ENCODE measurements at regions of chr9 and their contacts with region 1.

Region 1: GRCh38 chr9:114224247-114224610 is 68.9 kb downstream of the COL27A1 start:
- DNase-seq: no peak
- ATAC-seq: no peak
- H3K4me3 ChIP-seq: no peak overlapping the region
- H3K4me3 Mint-ChIP-seq: no peak overlapping the region
- H3K27ac ChIP-seq: no peak overlapping the region
- H3K27ac Mint-ChIP-seq: no peak overlapping the region
- H3K4me1 ChIP-seq: no peaks in the 10 kb centered on the region
- H3K4me1 Mint-ChIP-seq: no peaks in the 10 kb centered on the region
- H3K27me3 ChIP-seq: no peaks in the 10 kb centered on the region
- H3K27me3 Mint-ChIP-seq: no peaks in the 10 kb centered on the region
- CTCF ChIP-seq: no peak

Region 2: DNA sequence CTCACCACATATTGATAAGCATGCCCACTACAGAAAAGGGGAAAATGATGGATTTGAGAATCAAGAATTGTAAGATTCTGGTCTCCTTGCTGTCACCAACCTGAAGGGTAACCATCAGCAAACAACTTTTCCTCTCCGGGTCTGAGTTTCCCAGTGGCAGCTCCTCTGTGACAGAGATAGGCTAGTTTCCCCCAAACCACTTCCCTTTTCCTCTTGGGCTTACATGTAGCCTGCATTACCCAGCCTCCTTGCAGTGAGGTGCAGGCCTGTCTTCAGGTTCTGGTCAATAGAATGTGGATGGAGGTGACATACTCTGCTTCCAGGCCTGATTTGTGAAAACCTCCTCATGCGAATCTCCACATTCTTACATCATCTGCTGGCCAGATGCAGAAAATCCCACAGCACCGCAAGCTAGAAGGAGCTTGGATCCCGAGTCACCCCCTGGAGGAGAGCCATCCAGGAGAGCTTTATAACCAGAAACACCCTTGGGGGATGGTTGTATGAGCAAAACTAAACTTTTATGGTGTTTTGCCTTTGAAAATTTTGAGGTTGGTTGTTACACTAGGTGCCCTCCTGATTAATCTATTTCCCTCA is 554.6 kb before region 1 on chr9:
- CTCF ChIA-PET with region 1: no interaction called
- POLR2A ChIA-PET with region 1: no interaction called
- intact Hi-C with region 1: loop called in 1 of 2 experiments (anchors 5 kb)
- DNase-seq: no peak
- ATAC-seq: no peak
- H3K4me3 ChIP-seq: no peak overlapping the region
- H3K4me3 Mint-ChIP-seq: no peak overlapping the region
- H3K27ac ChIP-seq: no peak overlapping the region
- H3K27ac Mint-ChIP-seq: no peak overlapping the region
- H3K4me1 ChIP-seq: no peaks in the 10 kb centered on the region
- H3K4me1 Mint-ChIP-seq: no peaks in the 10 kb centered on the region
- H3K27me3 ChIP-seq: peaks cover 0 to 5% of the 10 kb centered on the region in 2 experiments
- H3K27me3 Mint-ChIP-seq: peaks cover 7% of the 10 kb centered on the region
- CTCF ChIP-seq: no peak

Region 3: DNA sequence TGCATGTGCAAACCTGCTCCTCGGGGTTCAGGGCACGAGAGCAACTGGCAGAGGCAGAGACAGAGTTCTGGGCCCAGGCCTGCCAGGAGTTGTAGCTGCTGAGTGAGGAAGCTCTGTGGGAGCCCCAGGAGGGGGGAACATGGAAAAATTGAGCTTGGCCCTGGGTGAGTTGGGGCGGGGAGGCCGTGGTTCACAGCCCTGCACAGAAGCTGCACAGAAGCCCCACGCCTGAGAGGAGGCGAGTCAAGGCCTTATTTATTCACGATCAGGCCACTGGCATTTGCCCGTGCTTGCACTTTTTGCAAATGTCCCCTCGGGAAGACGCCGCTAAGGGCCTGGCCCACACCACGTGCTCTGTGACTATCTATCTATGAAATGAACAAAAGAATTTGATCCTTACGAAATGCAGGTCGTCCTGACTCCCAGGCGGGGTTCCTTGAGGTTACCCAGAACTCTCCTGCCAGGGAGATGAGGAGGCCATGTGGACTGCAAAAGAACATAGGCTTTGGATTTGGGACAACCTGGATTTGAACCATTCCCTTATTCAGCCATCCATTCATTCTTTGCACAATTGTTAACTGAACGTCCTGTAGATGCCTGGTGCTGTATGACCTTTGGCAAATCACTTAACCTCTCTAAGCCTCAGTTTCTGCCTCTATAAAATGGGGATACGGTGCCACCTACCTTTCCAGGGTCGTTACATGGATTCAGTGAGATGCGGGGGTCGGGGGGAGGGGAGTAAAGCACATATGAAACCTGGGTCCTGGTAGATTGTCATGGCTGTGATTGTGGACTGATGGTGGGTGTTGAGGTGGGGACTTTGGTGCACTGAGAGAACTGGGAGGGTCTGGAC is 51.0 kb before region 1 on chr9:
- CTCF ChIA-PET with region 1: no interaction called
- POLR2A ChIA-PET with region 1: no interaction called
- intact Hi-C with region 1: no loop called
- DNase-seq: no peak
- ATAC-seq: no peak
- H3K4me3 ChIP-seq: no peak overlapping the region
- H3K4me3 Mint-ChIP-seq: no peak overlapping the region
- H3K27ac ChIP-seq: no peak overlapping the region
- H3K27ac Mint-ChIP-seq: no peak overlapping the region
- H3K4me1 ChIP-seq: no peaks in the 10 kb centered on the region
- H3K4me1 Mint-ChIP-seq: no peaks in the 10 kb centered on the region
- H3K27me3 ChIP-seq: no peaks in the 10 kb centered on the region
- H3K27me3 Mint-ChIP-seq: peaks cover 4% of the 10 kb centered on the region
- CTCF ChIP-seq: no peak

Region 4: DNA sequence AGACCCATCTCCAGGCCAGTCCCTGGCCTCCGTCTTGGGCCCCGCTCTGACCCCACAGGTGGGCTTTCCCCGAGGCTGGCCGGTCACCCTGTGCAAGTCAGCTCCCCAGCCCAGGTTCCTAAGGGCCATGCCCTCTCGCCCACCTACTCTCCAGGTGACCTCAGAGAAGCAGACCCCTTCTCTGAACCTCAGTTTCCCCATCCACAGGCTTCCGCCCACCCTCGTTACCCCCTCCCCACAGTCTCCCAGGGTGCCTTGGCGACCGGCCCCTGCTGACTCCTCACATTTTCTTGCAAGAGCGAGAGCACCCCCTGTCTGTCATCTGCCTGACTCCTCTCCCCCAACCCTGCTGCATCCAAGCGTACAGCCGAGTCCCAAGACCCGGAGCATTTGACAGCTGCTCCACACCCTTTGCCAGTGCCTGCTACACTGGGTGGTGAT is 47.4 kb after region 1 on chr9:
- CTCF ChIA-PET with region 1: no interaction called
- POLR2A ChIA-PET with region 1: no interaction called
- intact Hi-C with region 1: no loop called
- DNase-seq: peak in 2 of 14 experiments; percentile 53 to 56
- ATAC-seq: no peak
- H3K4me3 ChIP-seq: no peak overlapping the region
- H3K4me3 Mint-ChIP-seq: no peak overlapping the region
- H3K27ac ChIP-seq: no peak overlapping the region
- H3K27ac Mint-ChIP-seq: no peak overlapping the region
- H3K4me1 ChIP-seq: no peaks in the 10 kb centered on the region
- H3K4me1 Mint-ChIP-seq: no peaks in the 10 kb centered on the region
- H3K27me3 ChIP-seq: no peaks in the 10 kb centered on the region
- H3K27me3 Mint-ChIP-seq: no peaks in the 10 kb centered on the region
- CTCF ChIP-seq: no peak